CD4-positive, alpha-beta T cell (primary cell): ENCODE measurements at regions of chrX and their contacts with region 1.

Region 1: GRCh38 chrX:8815464-8816065 is 14.4 kb upstream of the FAM9A start:
- DNase-seq: peak in 5 of 14 experiments; percentile 5 to 51 (median 49)
- ATAC-seq: no peak
- H3K4me3 ChIP-seq: no peak overlapping the region
- H3K4me3 Mint-ChIP-seq: no peak overlapping the region
- H3K27ac ChIP-seq: no peak overlapping the region
- H3K27ac Mint-ChIP-seq: no peak overlapping the region
- H3K4me1 ChIP-seq: no peaks in the 10 kb centered on the region
- H3K4me1 Mint-ChIP-seq: no peaks in the 10 kb centered on the region
- H3K27me3 ChIP-seq: no peaks in the 10 kb centered on the region
- H3K27me3 Mint-ChIP-seq: peaks cover 5% of the 10 kb centered on the region
- CTCF ChIP-seq: peak; percentile 69

Region 2: GRCh38 chrX:7996414-7996813 is 819.2 kb before region 1 on chrX:
- CTCF ChIA-PET with region 1: no interaction called
- POLR2A ChIA-PET with region 1: no interaction called
- intact Hi-C with region 1: loop called in 1 of 2 experiments (anchors 5 kb)
- DNase-seq: peak in 11 of 14 experiments; percentile 0 to 53 (median 3)
- ATAC-seq: no peak
- H3K4me3 ChIP-seq: no peak overlapping the region
- H3K4me3 Mint-ChIP-seq: no peak overlapping the region
- H3K27ac ChIP-seq: no peak overlapping the region
- H3K27ac Mint-ChIP-seq: no peak overlapping the region
- H3K4me1 ChIP-seq: no peaks in the 10 kb centered on the region
- H3K4me1 Mint-ChIP-seq: no peaks in the 10 kb centered on the region
- H3K27me3 ChIP-seq: no peaks in the 10 kb centered on the region
- H3K27me3 Mint-ChIP-seq: no peaks in the 10 kb centered on the region
- CTCF ChIP-seq: peak; percentile 38

Region 3: GRCh38 chrX:8743126-8743732 is 72.3 kb before region 1 on chrX:
- CTCF ChIA-PET with region 1: no interaction called
- POLR2A ChIA-PET with region 1: no interaction called
- intact Hi-C with region 1: loop called (anchors 10 kb)
- DNase-seq: peak; percentile 27 to 74 (median 52)
- ATAC-seq: peak; percentile 46
- H3K4me3 ChIP-seq: no peak overlapping the region
- H3K4me3 Mint-ChIP-seq: no peak overlapping the region
- H3K27ac ChIP-seq: no peak overlapping the region
- H3K27ac Mint-ChIP-seq: no peak overlapping the region
- H3K4me1 ChIP-seq: no peaks in the 10 kb centered on the region
- H3K4me1 Mint-ChIP-seq: no peaks in the 10 kb centered on the region
- H3K27me3 ChIP-seq: peaks cover 0 to 2% of the 10 kb centered on the region in 2 experiments
- H3K27me3 Mint-ChIP-seq: peaks cover 11% of the 10 kb centered on the region
- CTCF ChIP-seq: peak; percentile 71

Region 4: DNA sequence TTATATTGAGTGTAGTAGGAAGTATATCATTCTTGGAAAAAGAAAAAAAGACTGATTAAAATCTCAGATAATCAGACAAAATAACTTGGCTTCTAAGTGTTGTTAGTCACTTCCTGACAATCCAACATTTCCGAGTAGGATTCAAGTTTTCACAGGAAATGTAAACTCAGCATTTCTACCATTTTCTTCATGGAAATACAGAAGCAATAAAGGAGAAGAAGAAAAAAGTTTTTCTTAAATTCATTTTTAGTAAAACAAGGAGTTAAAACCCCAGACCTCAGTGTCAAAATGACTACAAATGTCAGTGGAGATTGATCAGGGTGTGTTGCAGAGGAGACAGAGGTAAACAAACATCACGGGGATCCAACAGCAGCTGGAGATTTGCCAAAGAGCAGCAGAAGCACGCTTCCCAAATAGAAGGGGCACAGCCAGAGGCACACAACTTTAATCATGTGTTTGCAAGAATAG is 347.7 kb after region 1 on chrX:
- CTCF ChIA-PET with region 1: no interaction called
- POLR2A ChIA-PET with region 1: no interaction called
- intact Hi-C with region 1: no loop called
- DNase-seq: no peak
- ATAC-seq: no peak
- H3K4me3 ChIP-seq: no peak overlapping the region
- H3K4me3 Mint-ChIP-seq: no peak overlapping the region
- H3K27ac ChIP-seq: no peak overlapping the region
- H3K27ac Mint-ChIP-seq: no peak overlapping the region
- H3K4me1 ChIP-seq: no peaks in the 10 kb centered on the region
- H3K4me1 Mint-ChIP-seq: peaks cover 21% of the 10 kb centered on the region
- H3K27me3 ChIP-seq: no peaks in the 10 kb centered on the region
- H3K27me3 Mint-ChIP-seq: no peaks in the 10 kb centered on the region
- CTCF ChIP-seq: no peak

Region 5: GRCh38 chrX:9873952-9874351 is 1058.4 kb after region 1 on chrX:
- CTCF ChIA-PET with region 1: no interaction called
- POLR2A ChIA-PET with region 1: no interaction called
- intact Hi-C with region 1: loop called in 1 of 2 experiments (anchors 10 kb)
- DNase-seq: peak; percentile 4 to 61 (median 24)
- ATAC-seq: peak; percentile 71
- H3K4me3 ChIP-seq: no peak overlapping the region
- H3K4me3 Mint-ChIP-seq: no peak overlapping the region
- H3K27ac ChIP-seq: no peak overlapping the region
- H3K27ac Mint-ChIP-seq: no peak overlapping the region
- H3K4me1 ChIP-seq: no peaks in the 10 kb centered on the region
- H3K4me1 Mint-ChIP-seq: peaks cover 23% of the 10 kb centered on the region
- H3K27me3 ChIP-seq: no peaks in the 10 kb centered on the region
- H3K27me3 Mint-ChIP-seq: peaks cover 17% of the 10 kb centered on the region
- CTCF ChIP-seq: peak; percentile 31